Activated CD8-positive, alpha-beta T cell treated with anti-CD3 and anti-CD28 coated beads, Interleukin-2, amount 10 ng/mL, durations not matched to agents 7 days and 5 days (primary cell): ENCODE measurements at regions of chr18 and their contacts with region 1.

Region 1: GRCh38 chr18:3129053-3129864 is 90.5 kb downstream of the MYOM1 start:
- DNase-seq: peak; percentile 89
- ATAC-seq: peak; percentile 100
- H3K4me3 Mint-ChIP-seq: no peak overlapping the region
- H3K27ac Mint-ChIP-seq: no peak overlapping the region
- H3K4me1 Mint-ChIP-seq: peaks cover 10% of the 10 kb centered on the region
- H3K27me3 Mint-ChIP-seq: no peaks in the 10 kb centered on the region

Region 2: DNA sequence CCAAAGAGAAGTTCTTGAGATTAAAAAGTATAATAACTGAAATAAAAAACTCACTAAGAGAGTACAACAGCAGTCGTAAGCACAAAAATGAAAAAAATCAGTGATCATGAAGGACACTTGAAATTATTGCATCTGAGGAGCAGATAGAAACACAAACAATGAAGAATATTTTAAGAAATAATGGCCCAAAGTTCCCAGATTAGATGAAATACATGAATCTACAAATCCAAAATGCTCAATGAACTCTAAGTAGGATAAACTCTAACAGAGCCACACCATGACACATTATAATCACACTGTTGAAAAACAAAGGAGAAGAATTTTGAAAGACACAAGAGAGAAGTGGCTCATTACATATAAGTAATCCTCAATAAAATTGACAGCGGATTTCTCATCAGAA is 314.3 kb before region 1 on chr18:
- CTCF ChIA-PET with region 1: no interaction called
- POLR2A ChIA-PET with region 1: no interaction called
- DNase-seq: no peak
- ATAC-seq: no peak
- H3K4me3 Mint-ChIP-seq: no peak overlapping the region
- H3K27ac Mint-ChIP-seq: no peak overlapping the region
- H3K4me1 Mint-ChIP-seq: no peaks in the 10 kb centered on the region
- H3K27me3 Mint-ChIP-seq: peaks cover 3% of the 10 kb centered on the region

Region 3: DNA sequence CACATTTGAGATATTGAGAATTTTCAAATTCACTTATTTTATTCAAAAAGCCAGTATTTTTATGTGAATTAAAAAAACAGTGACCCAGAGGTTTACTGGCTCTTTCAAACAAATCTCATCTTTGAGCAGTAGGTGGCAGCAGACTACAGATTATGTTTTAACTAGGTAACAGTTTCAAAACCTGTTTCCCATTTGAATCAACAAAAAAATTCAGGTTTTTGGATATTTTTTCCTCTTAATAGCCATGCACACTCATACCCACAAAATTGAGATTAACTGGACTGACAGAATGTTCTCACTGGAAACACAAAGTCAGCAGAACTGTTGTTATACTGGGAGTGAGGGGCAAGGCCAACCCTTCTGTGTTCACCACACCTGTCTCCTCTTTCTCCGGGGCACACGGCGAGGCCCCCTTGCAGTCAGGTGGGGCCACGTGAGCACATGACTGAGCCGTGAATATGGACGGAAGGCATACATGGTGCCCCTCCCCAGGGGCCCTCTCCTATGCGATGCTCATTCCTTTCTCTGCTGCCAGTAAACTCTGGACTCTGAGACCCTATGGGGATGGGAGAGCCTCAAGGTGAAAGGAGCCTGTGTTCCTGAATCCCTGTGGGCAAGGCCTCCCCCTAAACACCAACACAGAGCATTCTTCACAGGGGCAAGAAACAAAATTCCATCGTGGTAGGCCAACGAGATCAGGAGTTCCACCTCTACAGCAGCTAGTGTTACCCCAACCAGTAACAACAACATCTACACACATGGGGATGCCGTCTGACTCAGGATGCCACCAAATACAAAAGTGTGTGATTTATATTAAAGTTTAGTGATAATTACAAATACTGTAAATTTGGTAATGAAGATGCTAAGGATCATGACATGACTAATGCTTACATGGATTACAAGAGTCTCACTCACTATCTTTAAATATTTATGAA is 196.7 kb before region 1 on chr18:
- CTCF ChIA-PET with region 1: interaction called, 16 read pairs
- POLR2A ChIA-PET with region 1: no interaction called
- DNase-seq: peak; percentile 75
- ATAC-seq: peak; percentile 73
- H3K4me3 Mint-ChIP-seq: no peak overlapping the region
- H3K27ac Mint-ChIP-seq: peak overlapping the region; percentile 67
- H3K4me1 Mint-ChIP-seq: peaks cover 26% of the 10 kb centered on the region
- H3K27me3 Mint-ChIP-seq: no peaks in the 10 kb centered on the region

Region 4: DNA sequence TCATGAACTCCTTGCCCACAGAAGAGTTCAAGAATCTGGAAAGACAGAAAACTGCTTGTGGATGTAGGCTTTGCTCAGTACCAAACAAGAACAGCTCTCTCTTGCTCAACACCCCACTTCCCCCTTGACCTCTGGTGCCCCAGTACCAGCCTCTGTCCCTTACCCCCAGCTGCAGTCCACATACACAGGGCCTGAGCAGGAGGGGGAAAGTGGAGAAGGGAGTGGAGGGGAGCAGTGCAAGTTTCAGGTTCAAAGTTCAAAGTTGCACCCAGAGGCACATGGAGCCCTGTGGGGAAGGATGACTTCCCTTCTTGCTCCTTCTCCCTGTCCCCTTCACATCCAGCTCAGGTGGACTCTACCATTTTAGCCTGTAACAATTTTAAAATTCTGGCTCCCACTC is 55.2 kb before region 1 on chr18:
- CTCF ChIA-PET with region 1: interaction called, 30 read pairs
- POLR2A ChIA-PET with region 1: no interaction called
- DNase-seq: no peak
- ATAC-seq: no peak
- H3K4me3 Mint-ChIP-seq: no peak overlapping the region
- H3K27ac Mint-ChIP-seq: no peak overlapping the region
- H3K4me1 Mint-ChIP-seq: peaks cover 23% of the 10 kb centered on the region
- H3K27me3 Mint-ChIP-seq: no peaks in the 10 kb centered on the region

Region 5: DNA sequence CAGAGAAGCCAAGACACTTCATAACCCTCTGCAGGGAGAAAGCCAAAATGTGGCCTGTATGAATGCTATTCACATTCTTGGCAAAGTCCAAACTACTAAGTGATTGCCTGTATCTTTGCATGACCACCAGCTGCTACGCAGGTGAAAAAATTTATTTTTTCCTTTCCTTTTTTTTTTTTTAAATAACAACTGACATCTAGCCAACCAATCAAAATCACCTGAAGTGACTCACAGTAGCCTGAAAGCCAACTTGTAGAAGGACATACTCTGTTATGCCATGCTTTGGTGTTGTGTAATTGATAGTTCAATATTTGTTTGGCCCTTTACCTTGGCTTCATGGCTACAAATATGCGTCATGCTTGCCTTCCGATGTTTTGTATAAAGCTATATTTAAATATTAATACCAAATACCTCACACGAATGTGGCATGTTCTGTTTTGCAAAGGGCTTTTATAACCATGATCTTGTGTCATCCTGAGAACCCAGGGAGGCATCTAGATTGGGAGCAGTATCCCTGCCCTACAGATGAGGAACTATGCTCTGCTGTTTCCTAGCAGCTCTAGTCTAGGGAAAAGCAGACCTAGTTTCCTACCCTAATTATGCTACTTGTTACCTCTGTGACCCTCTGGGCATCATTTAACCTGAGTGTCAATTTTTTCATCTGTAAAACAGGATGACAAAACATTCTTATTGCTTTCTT is 11.6 kb before region 1 on chr18:
- CTCF ChIA-PET with region 1: interaction called, 22 read pairs
- POLR2A ChIA-PET with region 1: no interaction called
- DNase-seq: no peak
- ATAC-seq: no peak
- H3K4me3 Mint-ChIP-seq: no peak overlapping the region
- H3K27ac Mint-ChIP-seq: no peak overlapping the region
- H3K4me1 Mint-ChIP-seq: no peaks in the 10 kb centered on the region
- H3K27me3 Mint-ChIP-seq: peaks cover 2% of the 10 kb centered on the region

Region 6: GRCh38 chr18:3151399-3152264 is 22.4 kb after region 1 on chr18:
- CTCF ChIA-PET with region 1: interaction called, 22 read pairs
- POLR2A ChIA-PET with region 1: no interaction called
- DNase-seq: no peak
- ATAC-seq: no peak
- H3K4me3 Mint-ChIP-seq: no peak overlapping the region
- H3K27ac Mint-ChIP-seq: no peak overlapping the region
- H3K4me1 Mint-ChIP-seq: no peaks in the 10 kb centered on the region
- H3K27me3 Mint-ChIP-seq: no peaks in the 10 kb centered on the region